ENCODE measurements at regions of chr12 and their contacts with region 1.

Region 1: DNA sequence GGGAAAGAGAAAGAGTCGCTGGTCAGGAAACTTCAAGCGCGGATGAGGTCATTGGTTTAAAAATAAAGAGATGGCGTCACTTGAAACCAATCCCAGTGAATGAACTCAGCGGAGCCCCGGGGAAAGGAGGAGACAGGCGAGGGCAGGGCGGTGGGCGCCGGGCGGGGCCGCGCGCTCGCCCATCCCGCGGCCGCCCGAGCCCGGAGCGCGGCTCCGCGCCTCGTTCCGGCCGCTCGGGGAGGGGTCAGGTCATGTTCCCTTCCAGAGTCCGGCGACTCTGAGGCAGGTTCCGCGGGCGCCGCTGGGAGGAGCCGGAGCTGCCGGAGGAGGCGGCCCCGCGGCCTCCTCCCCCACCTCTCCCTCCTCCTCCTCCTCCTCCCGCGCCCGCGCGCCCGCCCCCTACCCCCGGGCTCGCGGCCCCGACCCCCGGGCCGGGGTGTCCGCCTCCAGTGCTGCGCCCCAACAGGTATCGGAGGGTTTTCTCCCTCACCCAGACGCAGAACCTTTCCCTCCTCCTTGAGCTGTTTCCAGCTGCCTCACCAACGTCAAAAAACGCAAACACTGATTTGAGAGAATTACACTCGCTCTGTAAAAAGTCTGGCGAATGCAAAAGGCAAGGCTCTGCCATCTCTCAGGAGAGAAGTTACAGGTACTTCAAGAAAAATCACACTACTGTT is at the start of gene DUSP16:
- DNase-seq: peak; percentile 72
- ATAC-seq: peak; percentile 89
- H3K4me3 ChIP-seq: peak within 1 kb of the TSS; percentile 75 to 83
- H3K27ac ChIP-seq: peak within 1 kb of the TSS; percentile 89
- H3K4me1 ChIP-seq: peaks cover 16 to 24% of the 10 kb centered on the region in 2 experiments
- H3K27me3 ChIP-seq: no peaks in the 10 kb centered on the region
- CTCF ChIP-seq: no peak
- POLR2A ChIP-seq: peak; percentile 46
- RAD21 ChIP-seq: no peak
- total RNA-seq, gene DUSP16: 13.4 TPM

Region 2: DNA sequence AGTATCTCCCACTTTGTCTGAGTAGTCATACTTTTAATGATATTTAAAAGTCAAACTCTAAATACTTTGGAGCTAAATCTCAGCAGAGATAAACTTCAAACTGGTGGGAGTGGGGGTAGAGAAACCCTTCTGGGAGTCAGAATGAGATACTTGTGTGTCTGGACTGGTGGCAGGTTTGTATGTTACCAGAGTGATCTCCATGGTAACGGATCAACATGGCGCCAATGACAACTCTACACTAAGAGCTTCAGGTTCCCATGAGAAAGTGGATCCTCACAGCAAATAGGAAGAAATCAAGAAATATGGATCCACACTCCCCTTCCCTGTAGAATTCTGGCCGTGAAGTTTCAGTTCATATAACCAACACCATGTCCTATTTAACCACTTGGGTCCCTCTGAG is 791.4 kb before region 1 on chr12:
- CTCF ChIA-PET with region 1: no interaction called
- POLR2A ChIA-PET with region 1: no interaction called
- RAD21 ChIA-PET with region 1: no interaction called
- intact Hi-C with region 1: no loop called
- DNase-seq: no peak
- ATAC-seq: no peak
- H3K4me3 ChIP-seq: no peak overlapping the region
- H3K27ac ChIP-seq: no peak overlapping the region
- H3K4me1 ChIP-seq: no peaks in the 10 kb centered on the region
- H3K27me3 ChIP-seq: no peaks in the 10 kb centered on the region; the same call in 1 of the 2 replicates
- CTCF ChIP-seq: no peak
- POLR2A ChIP-seq: no peak
- RAD21 ChIP-seq: no peak

Region 3: DNA sequence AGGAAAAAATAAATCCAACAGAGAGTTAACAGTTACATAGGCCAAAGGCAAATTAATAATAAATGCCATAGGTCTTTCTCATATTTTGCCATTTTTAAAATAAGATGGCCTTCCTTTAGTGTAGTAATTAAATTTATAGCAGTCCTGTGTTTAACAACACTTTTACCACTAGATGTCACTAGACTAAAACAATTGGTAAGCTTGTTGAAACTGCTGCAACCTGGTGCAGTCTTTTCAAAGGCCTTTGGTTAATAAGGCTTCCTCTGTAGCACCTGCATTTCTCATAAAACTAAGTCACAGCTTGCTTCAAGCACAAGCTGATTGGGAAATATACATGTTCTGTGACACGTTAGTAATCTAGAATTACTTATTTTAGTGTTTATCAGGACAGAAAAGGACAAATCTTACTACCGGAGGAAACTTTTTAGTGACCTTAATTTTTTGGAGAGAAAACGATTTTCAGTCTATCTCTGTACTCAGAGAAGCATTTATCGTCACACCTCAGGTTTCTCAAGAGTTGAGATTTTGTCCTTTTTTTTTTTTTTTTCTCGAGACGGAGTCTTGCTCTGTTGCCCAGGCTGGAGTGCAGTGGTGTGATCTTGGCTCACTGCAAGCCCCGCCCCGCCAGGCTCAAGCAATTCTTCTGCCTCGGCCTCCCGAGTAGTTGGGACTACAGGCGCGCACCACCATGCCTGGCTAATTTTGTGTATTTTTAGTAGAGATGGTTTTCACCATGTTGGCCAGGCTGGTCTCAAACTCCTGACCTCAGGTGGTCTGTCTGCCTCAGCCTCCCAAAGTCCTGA is 185.9 kb before region 1 on chr12:
- CTCF ChIA-PET with region 1: interaction called, 5 read pairs
- POLR2A ChIA-PET with region 1: no interaction called
- RAD21 ChIA-PET with region 1: no interaction called
- intact Hi-C with region 1: loop called (anchors 1 kb)
- DNase-seq: peak; percentile 65
- ATAC-seq: peak; percentile 88
- H3K4me3 ChIP-seq: no peak overlapping the region
- H3K27ac ChIP-seq: no peak overlapping the region
- H3K4me1 ChIP-seq: no peaks in the 10 kb centered on the region
- H3K27me3 ChIP-seq: no peaks in the 10 kb centered on the region
- CTCF ChIP-seq: peak; percentile 49 to 91 (median 81)
- POLR2A ChIP-seq: no peak
- RAD21 ChIP-seq: peak; percentile 93

Region 4: GRCh38 chr12:12611512-12612306 is 49.0 kb after region 1 on chr12 and contains the start of gene CREBL2:
- CTCF ChIA-PET with region 1: no interaction called
- POLR2A ChIA-PET with region 1: no interaction called
- RAD21 ChIA-PET with region 1: no interaction called
- intact Hi-C with region 1: loop called (anchors 2 kb)
- DNase-seq: peak; percentile 91
- ATAC-seq: peak; percentile 89
- H3K4me3 ChIP-seq: peak within 1 kb of the TSS; percentile 82 to 93
- H3K27ac ChIP-seq: peak within 1 kb of the TSS; percentile 86
- H3K4me1 ChIP-seq: peaks cover 12 to 15% of the 10 kb centered on the region in 2 experiments
- H3K27me3 ChIP-seq: no peaks in the 10 kb centered on the region
- CTCF ChIP-seq: no peak
- POLR2A ChIP-seq: peak; percentile 55
- RAD21 ChIP-seq: no peak
- total RNA-seq, gene CREBL2: 11.3 TPM

Region 5: GRCh38 chr12:12654691-12655460 is 92.2 kb after region 1 on chr12:
- CTCF ChIA-PET with region 1: no interaction called
- POLR2A ChIA-PET with region 1: no interaction called
- RAD21 ChIA-PET with region 1: no interaction called
- intact Hi-C with region 1: loop called (anchors 5 kb)
- DNase-seq: no peak
- ATAC-seq: no peak
- H3K4me3 ChIP-seq: no peak overlapping the region
- H3K27ac ChIP-seq: no peak overlapping the region
- H3K4me1 ChIP-seq: no peaks in the 10 kb centered on the region
- H3K27me3 ChIP-seq: no peaks in the 10 kb centered on the region
- CTCF ChIP-seq: no peak
- POLR2A ChIP-seq: no peak
- RAD21 ChIP-seq: no peak